ENCODE measurements at regions of chr22 and their contacts with region 1.

Region 1: GRCh38 chr22:46116491-46116958 is 33.8 kb upstream of the PPARA start:
- DNase-seq: peak; percentile 73
- ATAC-seq: peak; percentile 81
- H3K4me3 ChIP-seq: no peak overlapping the region
- H3K27ac ChIP-seq: no peak overlapping the region; the same call in 1 of the 2 replicates
- H3K4me1 ChIP-seq: peaks cover 15% of the 10 kb centered on the region
- H3K27me3 ChIP-seq: no peaks in the 10 kb centered on the region
- CTCF ChIP-seq: peak; percentile 98
- POLR2A ChIP-seq: no peak
- RAD21 ChIP-seq: peak; percentile 87

Region 2: DNA sequence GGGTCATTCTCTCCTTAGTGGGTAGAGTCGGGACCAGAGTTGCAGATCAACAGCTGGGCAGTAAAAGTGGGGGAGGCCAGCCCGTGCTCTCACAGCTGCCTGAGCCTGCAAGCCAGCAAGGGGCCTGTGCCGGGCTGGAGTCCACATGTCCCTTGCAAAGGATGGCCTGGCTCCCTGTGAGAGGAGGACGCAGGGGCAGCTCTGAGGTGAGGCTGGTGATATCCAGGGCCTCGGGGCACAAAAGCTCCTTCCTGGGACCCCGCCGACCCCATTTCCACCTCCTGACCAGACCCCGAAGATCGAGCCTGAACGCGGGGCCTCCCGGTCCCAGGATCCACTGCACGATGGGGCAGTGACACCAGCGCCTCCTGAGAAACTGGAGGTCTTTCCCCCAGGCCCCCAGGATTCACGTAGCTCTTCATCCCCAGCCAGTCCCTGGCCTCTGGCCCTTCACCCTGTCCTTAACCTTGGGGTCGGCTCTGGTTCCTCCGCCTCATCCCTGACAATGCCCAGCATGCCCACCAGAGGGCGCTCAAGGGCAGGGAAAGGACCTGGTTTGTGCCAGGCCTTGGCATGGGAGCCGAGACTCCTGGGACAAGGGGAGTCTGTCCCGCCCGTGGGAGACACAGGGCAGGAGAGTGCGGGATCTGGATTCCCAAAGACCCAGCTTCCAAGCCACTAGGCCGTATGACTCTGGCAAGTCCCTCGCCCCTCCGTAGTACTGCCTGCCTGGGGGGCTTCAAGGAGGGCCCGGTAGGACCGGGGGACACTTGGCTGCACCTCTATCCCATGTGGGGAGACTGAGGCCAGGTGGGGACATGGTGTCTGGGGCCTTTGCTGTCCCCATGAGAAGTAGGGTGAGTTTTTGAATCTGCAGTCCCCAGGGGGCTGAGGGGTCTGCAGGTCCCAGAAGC is 121.8 kb before region 1 on chr22:
- CTCF ChIA-PET with region 1: interaction called, 10 read pairs
- POLR2A ChIA-PET with region 1: interaction called, 6 read pairs
- dilution Hi-C with region 1: no loop called
- in situ Hi-C with region 1: no loop called
- intact Hi-C with region 1: loop called (anchors 1 kb)
- DNase-seq: peak; percentile 44
- ATAC-seq: peak; percentile 64
- H3K4me3 ChIP-seq: no peak overlapping the region
- H3K27ac ChIP-seq: no peak overlapping the region
- H3K4me1 ChIP-seq: peaks cover 28% of the 10 kb centered on the region
- H3K27me3 ChIP-seq: peaks cover 9% of the 10 kb centered on the region; the same call in 1 of the 2 replicates
- CTCF ChIP-seq: peak; percentile 96
- POLR2A ChIP-seq: peak; percentile 42; the same call in 1 of the 2 replicates
- RAD21 ChIP-seq: peak; percentile 96

Region 3: GRCh38 chr22:46027192-46028105 is 89.1 kb before region 1 on chr22:
- CTCF ChIA-PET with region 1: no interaction called
- POLR2A ChIA-PET with region 1: no interaction called
- dilution Hi-C with region 1: no loop called
- in situ Hi-C with region 1: no loop called
- intact Hi-C with region 1: no loop called
- DNase-seq: no peak
- ATAC-seq: peak; percentile 50
- H3K4me3 ChIP-seq: no peak overlapping the region; the same call in 1 of the 2 replicates
- H3K27ac ChIP-seq: no peak overlapping the region
- H3K4me1 ChIP-seq: peaks cover 4% of the 10 kb centered on the region
- H3K27me3 ChIP-seq: peaks cover 30% of the 10 kb centered on the region
- CTCF ChIP-seq: no peak
- POLR2A ChIP-seq: no peak
- RAD21 ChIP-seq: no peak

Measured in IMR-90 (cell line).